Naive thymus-derived CD4-positive, alpha-beta T cell (primary cell): ENCODE measurements at regions of chr20 and their contacts with region 1.

Region 1: GRCh38 chr20:59006864-59007664 is at the start of gene CTSZ:
- DNase-seq: peak in 7 of 9 donors; percentile 22 to 70 (median 36)
- ATAC-seq: peak; percentile 63
- H3K4me3 ChIP-seq: peak within 1 kb of the TSS; percentile 55
- H3K4me3 Mint-ChIP-seq: peak within 1 kb of the TSS; percentile 72 to 89 (median 80)
- H3K27ac ChIP-seq: peak within 1 kb of the TSS; percentile 62
- H3K27ac Mint-ChIP-seq: peak within 1 kb of the TSS in 6 of 9 donors; percentile 36 to 93 (median 62)
- H3K4me1 ChIP-seq: peaks cover 20 to 23% of the 10 kb centered on the region in 2 donors
- H3K4me1 Mint-ChIP-seq: peaks cover 32 to 54% (median 38%) of the 10 kb centered on the region in 7 donors
- H3K27me3 ChIP-seq: no peaks in the 10 kb centered on the region
- H3K27me3 Mint-ChIP-seq: no peaks in the 10 kb centered on the region
- total RNA-seq, gene CTSZ: 29.5 to 165 (median 34.1) TPM

Region 2: GRCh38 chr20:58930496-58931004 is 76.5 kb before region 1 on chr20:
- CTCF ChIA-PET with region 1: no interaction called
- POLR2A ChIA-PET with region 1: no interaction called
- intact Hi-C with region 1: no loop called
- DNase-seq: no peak
- ATAC-seq: no peak
- H3K4me3 ChIP-seq: no peak overlapping the region
- H3K4me3 Mint-ChIP-seq: no peak overlapping the region
- H3K27ac ChIP-seq: no peak overlapping the region
- H3K27ac Mint-ChIP-seq: no peak overlapping the region
- H3K4me1 ChIP-seq: no peaks in the 10 kb centered on the region
- H3K4me1 Mint-ChIP-seq: peaks cover 0 to 5% (median 0%) of the 10 kb centered on the region in 7 donors
- H3K27me3 ChIP-seq: no peaks in the 10 kb centered on the region
- H3K27me3 Mint-ChIP-seq: peaks cover 9 to 44% (median 26%) of the 10 kb centered on the region in 5 donors

Region 3: DNA sequence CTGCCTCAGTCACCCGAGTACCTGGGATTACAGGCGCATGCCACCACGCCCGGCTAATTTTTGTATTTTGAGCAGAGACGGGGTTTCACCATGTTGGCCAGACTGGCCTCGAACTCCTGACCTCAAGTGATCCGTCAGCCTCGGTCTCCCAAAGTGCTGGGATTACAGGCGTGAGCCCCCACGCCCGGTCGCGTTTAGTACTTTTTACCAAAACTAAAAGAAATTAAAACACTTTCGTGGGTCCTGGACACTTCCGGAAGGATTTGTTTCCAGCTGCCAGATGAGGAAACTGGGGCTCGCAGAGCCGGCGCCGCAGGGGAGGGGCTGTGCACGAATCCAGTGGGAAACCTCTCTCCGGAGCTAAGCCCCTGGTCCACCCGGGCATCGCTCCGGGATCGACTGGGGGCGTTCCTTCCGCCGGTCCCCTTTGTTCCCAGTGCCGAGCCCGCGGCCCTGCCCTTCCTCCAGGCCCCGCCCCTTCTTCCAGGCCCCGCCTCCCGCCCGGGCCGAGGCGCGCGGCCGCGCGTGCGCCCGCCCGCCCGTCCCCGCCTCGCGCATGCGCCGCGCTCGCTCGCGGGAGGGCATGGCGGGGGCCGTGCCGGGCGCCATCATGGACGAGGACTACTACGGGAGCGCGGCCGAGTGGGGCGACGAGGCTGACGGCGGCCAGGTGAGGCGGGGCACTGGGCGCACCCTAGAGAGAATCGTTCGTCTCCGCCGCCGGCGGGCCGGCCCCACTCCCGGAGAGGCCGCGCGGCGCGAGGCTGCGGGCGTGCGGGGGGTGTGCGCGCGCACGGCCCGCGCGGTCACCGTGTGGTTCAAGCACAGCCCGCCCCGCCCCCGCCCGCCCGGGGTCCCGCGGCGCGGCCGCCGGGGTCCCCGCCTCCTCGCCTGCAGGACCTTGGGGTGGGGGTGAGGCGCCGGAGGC is 26.1 kb before region 1 on chr20 and contains the start of gene NELFCD:
- CTCF ChIA-PET with region 1: no interaction called
- POLR2A ChIA-PET with region 1: interaction called, 5 read pairs
- intact Hi-C with region 1: loop called (anchors 2 kb)
- DNase-seq: peak; percentile 78 to 96 (median 88)
- ATAC-seq: peak; percentile 97
- H3K4me3 ChIP-seq: peak within 1 kb of the TSS; percentile 91
- H3K4me3 Mint-ChIP-seq: peak within 1 kb of the TSS; percentile 86 to 97 (median 94)
- H3K27ac ChIP-seq: peak within 1 kb of the TSS; percentile 88
- H3K27ac Mint-ChIP-seq: peak within 1 kb of the TSS; percentile 77 to 98 (median 90)
- H3K4me1 ChIP-seq: peaks cover 24% of the 10 kb centered on the region in 2 donors
- H3K4me1 Mint-ChIP-seq: peaks cover 26 to 41% (median 32%) of the 10 kb centered on the region in 7 donors
- H3K27me3 ChIP-seq: no peaks in the 10 kb centered on the region
- H3K27me3 Mint-ChIP-seq: peaks cover 0 to 9% (median 0%) of the 10 kb centered on the region in 5 donors
- total RNA-seq, gene NELFCD: 84.5 to 96.1 (median 90.8) TPM

Region 4: GRCh38 chr20:58991715-58992114 is 15.3 kb before region 1 on chr20:
- CTCF ChIA-PET with region 1: no interaction called
- POLR2A ChIA-PET with region 1: interaction called, 3 read pairs
- intact Hi-C with region 1: loop called in 1 of 2 experiments (anchors 2 kb)
- DNase-seq: no peak
- ATAC-seq: no peak
- H3K4me3 ChIP-seq: no peak overlapping the region
- H3K4me3 Mint-ChIP-seq: no peak overlapping the region
- H3K27ac ChIP-seq: no peak overlapping the region
- H3K27ac Mint-ChIP-seq: peak overlapping the region in 2 of 9 donors; percentile 42 to 45
- H3K4me1 ChIP-seq: no peaks in the 10 kb centered on the region
- H3K4me1 Mint-ChIP-seq: peaks cover 0 to 11% (median 3%) of the 10 kb centered on the region in 7 donors
- H3K27me3 ChIP-seq: no peaks in the 10 kb centered on the region
- H3K27me3 Mint-ChIP-seq: no peaks in the 10 kb centered on the region

Region 5: GRCh38 chr20:59042796-59043660 is 36.0 kb after region 1 on chr20:
- CTCF ChIA-PET with region 1: no interaction called
- POLR2A ChIA-PET with region 1: no interaction called
- intact Hi-C with region 1: loop called (anchors 2 kb)
- DNase-seq: peak; percentile 90 to 98 (median 94)
- ATAC-seq: peak; percentile 98
- H3K4me3 ChIP-seq: peak overlapping the region; percentile 76
- H3K4me3 Mint-ChIP-seq: peak overlapping the region; percentile 81 to 96 (median 90)
- H3K27ac ChIP-seq: peak overlapping the region; percentile 93
- H3K27ac Mint-ChIP-seq: peak overlapping the region; percentile 76 to 96 (median 91)
- H3K4me1 ChIP-seq: peaks cover 30 to 32% of the 10 kb centered on the region in 2 donors
- H3K4me1 Mint-ChIP-seq: peaks cover 35 to 54% (median 50%) of the 10 kb centered on the region in 7 donors
- H3K27me3 ChIP-seq: no peaks in the 10 kb centered on the region
- H3K27me3 Mint-ChIP-seq: no peaks in the 10 kb centered on the region